ENCODE measurements at regions of chr3 and their contacts with region 1.

Region 1: DNA sequence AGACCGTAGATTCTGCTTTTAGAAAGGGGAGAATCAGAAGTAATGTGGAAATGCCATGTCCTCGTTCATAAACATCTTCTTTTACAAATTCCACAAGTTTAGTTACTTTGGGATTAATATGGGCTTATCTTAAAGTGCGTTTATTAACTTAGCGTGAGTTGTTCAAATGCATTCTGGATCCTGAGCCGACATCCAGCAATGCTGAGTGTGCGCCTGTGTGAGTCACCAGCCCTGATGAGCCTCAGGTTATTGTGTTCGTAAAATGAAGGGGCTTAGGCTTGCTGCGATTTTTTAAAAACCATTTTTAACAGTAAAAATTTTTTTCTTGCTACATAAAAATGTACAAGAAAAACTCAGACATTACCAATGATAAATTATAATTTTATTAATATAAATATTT is 57.9 kb downstream of the TFRC start:
- DNase-seq: peak in 1 of 2 experiments; percentile 13
- H3K4me3 ChIP-seq: no peak overlapping the region
- H3K27ac ChIP-seq: no peak overlapping the region
- H3K4me1 ChIP-seq: no peaks in the 10 kb centered on the region
- H3K27me3 ChIP-seq: no peaks in the 10 kb centered on the region
- CTCF ChIP-seq: no peak

Region 2: DNA sequence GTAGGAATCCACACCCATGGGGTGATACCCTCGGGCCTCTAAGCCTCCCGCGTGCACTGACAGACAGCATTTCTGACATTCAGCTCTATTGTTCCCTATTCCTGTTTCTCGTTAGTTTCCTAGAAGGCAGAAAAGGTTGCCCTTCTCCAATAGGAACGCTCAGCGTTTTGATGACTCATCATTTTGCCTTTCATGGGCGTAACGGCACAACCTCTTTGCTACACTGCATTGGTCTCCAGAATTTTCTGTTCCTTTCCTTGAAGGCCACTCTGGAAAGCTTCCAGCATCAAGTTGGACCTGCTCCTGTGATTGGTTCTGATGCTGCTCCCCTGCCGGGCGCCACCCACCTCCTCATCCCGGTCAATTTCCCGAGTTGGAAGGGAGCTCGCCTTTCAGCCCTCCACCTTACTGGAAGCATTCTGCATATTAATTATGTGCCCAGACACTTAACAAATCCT is 102.6 kb before region 1 on chr3:
- CTCF ChIA-PET with region 1: no interaction called
- POLR2A ChIA-PET with region 1: no interaction called
- intact Hi-C with region 1: no loop called
- DNase-seq: peak in 1 of 2 experiments; percentile 25
- H3K4me3 ChIP-seq: no peak overlapping the region
- H3K27ac ChIP-seq: no peak overlapping the region
- H3K4me1 ChIP-seq: no peaks in the 10 kb centered on the region
- H3K27me3 ChIP-seq: peaks cover 7% of the 10 kb centered on the region; the same call in 1 of the 2 replicates
- CTCF ChIP-seq: no peak

Region 3: DNA sequence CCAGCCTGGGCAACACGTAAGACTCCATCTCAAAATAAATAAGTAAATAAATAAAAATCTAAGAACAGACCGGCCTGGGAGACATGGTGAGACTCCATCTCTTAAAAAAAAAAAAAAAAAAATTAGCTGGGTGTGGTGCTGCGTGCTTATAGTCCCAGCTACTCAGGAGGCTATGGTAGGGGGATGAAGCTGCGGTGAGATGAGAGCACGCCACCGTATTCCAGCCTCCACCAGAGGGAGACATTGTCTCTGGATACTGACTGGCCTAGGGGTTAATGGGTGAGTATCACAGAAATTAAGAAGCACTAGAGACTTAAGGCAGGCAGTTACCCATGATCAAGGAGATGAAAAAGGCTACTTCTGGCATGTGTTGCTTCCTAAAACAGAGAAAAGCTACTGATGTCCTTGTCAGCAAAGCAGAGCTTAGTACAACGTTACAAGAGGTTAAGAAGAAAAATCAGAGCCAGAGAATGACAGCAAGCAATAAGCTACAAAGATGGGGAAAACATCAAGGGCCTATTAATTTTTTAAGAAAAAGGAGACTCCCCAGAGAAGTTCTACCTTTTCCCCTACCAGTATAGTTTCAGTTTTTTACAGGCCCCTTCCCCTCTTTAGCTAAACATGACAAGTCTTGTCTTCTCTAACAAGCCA is 49.4 kb after region 1 on chr3:
- CTCF ChIA-PET with region 1: interaction called, 5 read pairs
- POLR2A ChIA-PET with region 1: no interaction called
- intact Hi-C with region 1: loop called (anchors 5 kb)
- DNase-seq: peak in 1 of 2 experiments; percentile 68
- H3K4me3 ChIP-seq: no peak overlapping the region
- H3K27ac ChIP-seq: peak overlapping the region; percentile 10; the same call in 1 of the 2 replicates
- H3K4me1 ChIP-seq: no peaks in the 10 kb centered on the region; the same call in 1 of the 2 replicates
- H3K27me3 ChIP-seq: no peaks in the 10 kb centered on the region
- CTCF ChIP-seq: peak; percentile 96

Region 4: DNA sequence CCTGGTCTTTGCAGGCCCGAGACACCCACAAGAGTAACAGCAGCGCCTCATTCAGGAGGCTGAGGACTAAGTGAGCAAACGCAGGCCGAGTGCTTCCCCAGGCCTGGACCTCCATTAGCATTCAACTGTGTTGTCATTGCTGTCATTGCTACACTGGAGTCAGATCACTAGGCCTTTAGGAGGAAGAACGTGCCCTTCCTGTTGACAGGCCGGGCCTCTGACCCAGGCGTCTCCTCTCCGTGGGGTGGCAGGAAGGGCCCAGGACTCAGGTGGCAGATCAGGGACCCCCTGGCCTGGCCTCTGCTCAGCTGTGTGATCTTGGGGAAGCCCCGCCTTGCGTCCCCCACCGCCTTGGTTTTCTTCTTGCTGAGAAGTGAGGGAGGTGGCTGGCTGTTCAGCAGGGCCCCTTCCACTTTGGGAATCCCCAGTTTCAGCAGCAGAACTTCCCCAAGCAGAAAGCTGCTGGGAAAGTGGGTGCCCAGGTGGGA is 168.1 kb after region 1 on chr3:
- CTCF ChIA-PET with region 1: interaction called, 6 read pairs
- POLR2A ChIA-PET with region 1: no interaction called
- intact Hi-C with region 1: loop called (anchors 1 kb)
- DNase-seq: no peak
- H3K4me3 ChIP-seq: no peak overlapping the region
- H3K27ac ChIP-seq: no peak overlapping the region
- H3K4me1 ChIP-seq: peaks cover 14% of the 10 kb centered on the region
- H3K27me3 ChIP-seq: no peaks in the 10 kb centered on the region
- CTCF ChIP-seq: no peak; the same call in 1 of the 2 replicates

Region 5: GRCh38 chr3:196251918-196252317 is 228.0 kb after region 1 on chr3:
- CTCF ChIA-PET with region 1: no interaction called
- POLR2A ChIA-PET with region 1: no interaction called
- intact Hi-C with region 1: loop called (anchors 1 kb)
- DNase-seq: no peak
- H3K4me3 ChIP-seq: no peak overlapping the region
- H3K27ac ChIP-seq: no peak overlapping the region
- H3K4me1 ChIP-seq: no peaks in the 10 kb centered on the region
- H3K27me3 ChIP-seq: no peaks in the 10 kb centered on the region
- CTCF ChIP-seq: no peak

Measured in PC-9 (cell line).